ENCODE measurements at regions of chr14 and their contacts with region 1.

Region 1: DNA sequence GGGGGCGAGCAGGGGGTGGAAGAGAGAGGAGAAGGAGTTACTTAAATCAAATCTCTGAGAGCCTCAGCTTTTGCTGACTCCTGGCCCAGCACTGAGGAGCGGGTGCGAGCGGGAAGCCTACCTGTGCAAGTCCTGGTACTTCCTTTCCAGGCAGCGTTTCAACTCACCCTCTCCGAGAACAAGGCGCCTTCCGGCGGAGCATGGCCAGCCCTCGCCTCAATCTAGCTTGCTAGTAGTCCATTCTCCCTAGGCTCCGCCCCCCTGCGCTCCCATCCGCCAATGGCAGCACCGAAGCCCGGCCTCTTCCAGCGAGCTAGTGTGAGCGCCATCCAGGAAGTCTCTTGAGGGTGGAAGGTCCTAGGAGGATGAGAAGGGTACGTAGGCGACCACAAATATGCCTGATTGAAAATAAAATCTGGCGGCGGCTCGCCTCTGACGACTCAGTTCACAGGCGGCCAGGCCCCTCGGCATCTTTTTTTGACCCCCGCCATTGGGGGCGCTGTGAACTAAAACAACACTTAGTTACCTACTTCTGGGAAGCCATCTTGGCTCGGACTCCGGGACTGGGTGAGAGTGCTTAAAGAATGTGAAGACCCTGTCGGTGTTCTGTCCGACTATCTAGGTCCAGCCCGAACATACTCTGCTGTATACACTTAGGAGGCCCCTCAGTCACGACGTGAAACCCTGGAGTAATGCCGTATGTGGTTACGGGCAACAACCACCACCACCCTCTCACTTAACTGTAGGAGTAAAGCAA is at the start of gene CHD8:
- DNase-seq: peak; percentile 100
- ATAC-seq: peak; percentile 99
- H3K4me3 ChIP-seq: peak within 1 kb of the TSS; percentile 81
- H3K27ac ChIP-seq: peak within 1 kb of the TSS; percentile 94
- H3K4me1 ChIP-seq: no peaks in the 10 kb centered on the region; the same call in 1 of the 2 replicates
- H3K27me3 ChIP-seq: no peaks in the 10 kb centered on the region
- CTCF ChIP-seq: peak; percentile 82
- POLR2A ChIP-seq: peak; percentile 67
- RAD21 ChIP-seq: peak; percentile 38
- total RNA-seq, gene CHD8: 55.0 and 58.9 TPM in 2 replicates

Region 2: GRCh38 chr14:21437063-21437901 is 18.8 kb before region 1 on chr14:
- CTCF ChIA-PET with region 1: interaction called, 8 read pairs
- POLR2A ChIA-PET with region 1: interaction called, 4 read pairs
- dilution Hi-C with region 1: no loop called
- in situ Hi-C with region 1: no loop called
- intact Hi-C with region 1: loop called (anchors 1 kb)
- DNase-seq: peak; percentile 99
- ATAC-seq: peak; percentile 100
- H3K4me3 ChIP-seq: peak overlapping the region; percentile 90
- H3K27ac ChIP-seq: peak overlapping the region; percentile 90
- H3K4me1 ChIP-seq: peaks cover 5% of the 10 kb centered on the region
- H3K27me3 ChIP-seq: no peaks in the 10 kb centered on the region
- CTCF ChIP-seq: no peak
- POLR2A ChIP-seq: no peak
- RAD21 ChIP-seq: no peak

Region 3: DNA sequence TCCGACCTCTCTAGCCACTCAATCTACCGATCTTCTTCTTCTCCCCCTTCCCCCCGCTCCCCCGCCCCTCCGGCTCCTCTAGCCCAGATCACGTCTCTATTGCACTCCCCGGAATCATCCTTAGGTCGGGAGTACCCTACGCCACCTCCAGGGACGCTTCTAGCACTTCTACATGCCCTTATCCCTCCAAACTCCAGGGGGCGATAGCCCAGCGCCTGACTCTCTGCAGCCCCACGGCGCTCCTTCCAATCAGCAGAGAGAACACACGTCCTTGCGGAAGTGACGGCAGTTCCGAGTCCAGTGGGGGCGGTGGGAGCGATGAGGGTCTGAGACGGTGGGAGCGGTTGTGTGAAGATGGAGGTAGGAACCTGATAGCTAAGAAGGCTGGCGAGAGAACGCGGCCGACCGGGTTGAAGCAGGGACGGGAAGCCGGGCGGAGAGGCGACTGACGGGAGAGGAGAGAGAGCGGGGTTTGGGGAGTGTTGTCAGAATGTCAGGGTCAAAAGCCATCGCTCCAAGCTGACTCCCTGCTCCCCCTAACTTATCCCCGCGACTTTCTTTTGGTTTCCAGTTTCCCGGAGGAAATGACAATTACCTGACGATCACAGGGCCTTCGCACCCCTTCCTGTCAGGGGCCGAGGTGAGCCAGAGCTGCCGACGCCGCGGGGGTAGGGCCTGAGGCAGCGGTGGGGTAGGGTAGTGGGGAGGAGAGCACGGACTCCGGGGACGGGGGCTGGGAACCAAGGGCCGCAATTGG is 21.0 kb after region 1 on chr14 and contains the starts of genes RAB2B and TOX4:
- CTCF ChIA-PET with region 1: no interaction called
- POLR2A ChIA-PET with region 1: interaction called, 3 read pairs
- dilution Hi-C with region 1: no loop called
- in situ Hi-C with region 1: no loop called
- intact Hi-C with region 1: loop called (anchors 1 kb)
- DNase-seq: peak; percentile 99
- ATAC-seq: peak; percentile 100
- H3K4me3 ChIP-seq: peak within 1 kb of the TSS; percentile 90
- H3K27ac ChIP-seq: peak within 1 kb of the TSS; percentile 90
- H3K4me1 ChIP-seq: no peaks in the 10 kb centered on the region; the same call in 1 of the 2 replicates
- H3K27me3 ChIP-seq: no peaks in the 10 kb centered on the region
- CTCF ChIP-seq: peak; percentile 100; the same call in 1 of the 2 replicates
- POLR2A ChIP-seq: peak; percentile 95
- RAD21 ChIP-seq: peak; percentile 53; the same call in 1 of the 2 replicates
- total RNA-seq, gene RAB2B: 25.0 and 26.2 TPM in 2 replicates
- total RNA-seq, gene TOX4: 26.7 and 31.7 TPM in 2 replicates

Region 4: DNA sequence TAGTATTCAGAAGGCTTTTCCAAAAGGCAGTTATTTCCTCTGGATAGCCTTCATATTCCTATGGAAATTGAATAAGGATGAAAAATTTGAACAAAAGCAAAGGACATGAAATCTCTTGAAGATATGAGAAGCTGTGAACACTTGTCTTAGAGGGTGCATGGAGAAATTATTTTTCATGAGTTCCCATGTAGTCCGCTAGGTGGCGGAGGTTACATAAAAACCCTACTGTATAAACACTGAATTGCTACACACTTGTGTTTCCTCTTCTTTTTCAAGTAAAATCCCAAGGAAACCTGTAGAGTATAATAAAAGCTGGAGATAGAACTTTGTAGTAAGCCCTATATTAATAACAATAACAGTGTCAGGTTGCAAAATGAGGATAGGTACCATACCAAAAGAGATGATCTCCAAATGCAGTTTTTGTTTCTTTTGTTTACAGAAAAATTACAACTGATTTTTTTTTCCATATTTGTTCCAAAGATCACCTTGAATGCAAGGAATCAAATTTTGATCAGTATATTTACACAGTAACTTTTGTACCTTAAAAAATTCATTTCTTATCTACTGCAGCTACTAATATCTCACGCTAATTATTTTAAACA is 255.4 kb after region 1 on chr14:
- CTCF ChIA-PET with region 1: no interaction called
- POLR2A ChIA-PET with region 1: no interaction called
- dilution Hi-C with region 1: no loop called
- in situ Hi-C with region 1: no loop called
- intact Hi-C with region 1: loop called (anchors 5 kb)
- DNase-seq: peak; percentile 53
- ATAC-seq: peak; percentile 85
- H3K4me3 ChIP-seq: no peak overlapping the region
- H3K27ac ChIP-seq: no peak overlapping the region
- H3K4me1 ChIP-seq: no peaks in the 10 kb centered on the region
- H3K27me3 ChIP-seq: no peaks in the 10 kb centered on the region
- CTCF ChIP-seq: peak; percentile 67
- POLR2A ChIP-seq: no peak
- RAD21 ChIP-seq: peak; percentile 23; the same call in 1 of the 2 replicates

Measured in IMR-90 (cell line).